Activated CD4-positive, alpha-beta T cell treated with anti-CD3 and anti-CD28 coated beads for 36 hours (primary cell): ENCODE measurements at regions of chr6 and their contacts with region 1.

Region 1: GRCh38 chr6:148166339-148166968 is 176.2 kb upstream of the SASH1 start:
- DNase-seq: no peak
- ATAC-seq: peak; percentile 33
- H3K4me3 Mint-ChIP-seq: no peak overlapping the region
- H3K27ac Mint-ChIP-seq: no peak overlapping the region
- H3K4me1 Mint-ChIP-seq: peaks cover 2% of the 10 kb centered on the region
- H3K27me3 Mint-ChIP-seq: peaks cover 5% of the 10 kb centered on the region

Region 2: DNA sequence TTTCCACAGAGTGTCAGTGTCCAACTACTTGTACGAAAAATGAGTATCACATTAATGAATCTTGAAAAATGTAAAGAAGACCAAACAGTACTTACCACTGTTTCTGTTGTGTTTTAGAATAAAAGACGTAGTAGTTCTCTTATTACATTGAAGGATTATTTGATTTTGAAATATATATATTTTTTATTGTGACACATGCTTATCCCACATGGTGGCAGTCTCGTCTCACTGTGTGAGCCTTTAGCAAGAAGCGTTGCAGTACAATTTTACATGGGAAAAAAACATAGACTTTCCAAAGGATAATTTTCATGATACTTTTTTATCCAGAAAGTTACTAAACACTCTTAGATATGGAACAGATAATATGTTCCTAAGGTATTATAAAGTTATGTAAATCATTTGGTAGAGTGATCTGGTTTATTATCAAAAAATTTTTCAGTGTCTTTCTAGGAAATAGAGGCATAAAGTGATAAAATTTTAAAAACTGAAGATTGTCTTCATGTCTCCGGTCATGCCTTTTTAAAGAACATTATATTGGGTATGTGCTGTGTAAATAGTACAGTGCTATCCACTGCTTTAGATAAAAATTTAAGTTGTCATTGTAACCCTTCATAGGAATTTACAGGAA is 775.4 kb before region 1 on chr6:
- CTCF ChIA-PET with region 1: interaction called, 3 read pairs
- POLR2A ChIA-PET with region 1: no interaction called
- intact Hi-C with region 1: loop called in 1 of 2 experiments (anchors 5 kb)
- DNase-seq: no peak
- ATAC-seq: no peak
- H3K4me3 Mint-ChIP-seq: no peak overlapping the region
- H3K27ac Mint-ChIP-seq: no peak overlapping the region
- H3K4me1 Mint-ChIP-seq: no peaks in the 10 kb centered on the region
- H3K27me3 Mint-ChIP-seq: no peaks in the 10 kb centered on the region

Region 3: DNA sequence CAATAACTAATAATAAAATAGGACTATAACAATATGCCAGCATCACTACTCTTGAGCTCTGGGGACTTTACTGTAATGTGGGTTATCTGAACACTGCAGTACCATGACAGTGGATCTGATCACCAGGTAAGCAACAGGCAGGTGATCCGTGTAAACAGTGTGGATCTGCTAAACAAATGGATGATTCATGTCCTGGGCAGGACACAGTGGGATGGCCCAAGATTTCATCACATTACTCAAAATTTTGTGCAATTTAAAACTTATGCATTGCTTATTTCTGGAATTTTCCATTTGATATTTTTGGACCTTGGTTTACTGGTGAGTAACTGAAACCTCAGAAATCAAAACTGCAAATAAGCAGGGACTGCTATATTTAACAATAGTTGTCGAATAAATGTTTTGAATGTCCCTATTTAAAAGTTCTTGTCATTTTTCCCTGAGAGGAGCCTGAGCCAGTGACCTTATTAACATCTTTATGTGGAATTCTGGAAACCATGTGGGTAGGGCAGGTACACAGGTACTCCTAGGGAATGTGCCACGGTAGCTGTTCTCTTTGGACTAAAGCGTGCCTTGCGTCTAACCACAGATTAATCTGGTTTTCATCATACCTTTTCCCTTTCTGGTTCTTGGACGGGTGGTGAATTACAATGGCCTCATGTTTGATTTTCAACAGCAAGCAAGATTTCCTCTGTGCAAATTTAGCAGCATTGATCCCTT is 38.3 kb before region 1 on chr6:
- CTCF ChIA-PET with region 1: no interaction called
- POLR2A ChIA-PET with region 1: no interaction called
- intact Hi-C with region 1: no loop called
- DNase-seq: no peak
- ATAC-seq: no peak
- H3K4me3 Mint-ChIP-seq: no peak overlapping the region
- H3K27ac Mint-ChIP-seq: no peak overlapping the region
- H3K4me1 Mint-ChIP-seq: no peaks in the 10 kb centered on the region
- H3K27me3 Mint-ChIP-seq: peaks cover 14% of the 10 kb centered on the region

Region 4: DNA sequence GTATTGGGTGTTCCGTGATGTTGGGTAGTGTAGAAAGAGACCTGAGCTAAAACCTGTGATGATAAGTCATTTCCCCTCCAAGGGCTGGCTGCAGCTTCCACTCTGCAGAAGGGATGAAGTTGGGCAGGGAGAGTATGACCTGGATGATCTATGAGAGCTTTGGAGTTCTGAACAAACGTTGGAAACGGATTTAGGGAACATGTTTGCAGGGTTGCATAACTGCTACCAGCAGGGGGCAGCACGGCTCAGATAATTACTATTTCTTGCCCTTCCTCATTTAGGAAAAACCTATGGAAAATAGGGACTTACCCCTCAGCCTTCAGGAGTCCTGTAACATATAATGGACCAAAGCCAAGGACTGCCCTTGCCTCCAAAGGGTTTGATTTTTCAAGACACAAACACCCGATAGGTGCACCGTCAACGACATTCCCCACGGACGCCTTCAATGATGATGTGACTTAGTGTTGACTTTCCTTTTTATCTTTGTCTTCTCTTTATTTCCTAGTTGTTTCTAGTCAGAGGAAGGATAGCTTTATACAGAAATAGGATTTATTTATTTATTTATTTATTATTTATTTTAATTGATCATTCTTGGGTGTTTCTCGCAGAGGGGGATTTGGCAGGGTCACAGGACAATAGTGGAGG is 11.3 kb after region 1 on chr6:
- CTCF ChIA-PET with region 1: interaction called, 16 read pairs
- POLR2A ChIA-PET with region 1: no interaction called
- intact Hi-C with region 1: no loop called
- DNase-seq: peak; percentile 63
- ATAC-seq: no peak
- H3K4me3 Mint-ChIP-seq: no peak overlapping the region
- H3K27ac Mint-ChIP-seq: no peak overlapping the region
- H3K4me1 Mint-ChIP-seq: no peaks in the 10 kb centered on the region
- H3K27me3 Mint-ChIP-seq: peaks cover 24% of the 10 kb centered on the region